ENCODE measurements at regions of chr19 and their contacts with region 1.

Region 1: DNA sequence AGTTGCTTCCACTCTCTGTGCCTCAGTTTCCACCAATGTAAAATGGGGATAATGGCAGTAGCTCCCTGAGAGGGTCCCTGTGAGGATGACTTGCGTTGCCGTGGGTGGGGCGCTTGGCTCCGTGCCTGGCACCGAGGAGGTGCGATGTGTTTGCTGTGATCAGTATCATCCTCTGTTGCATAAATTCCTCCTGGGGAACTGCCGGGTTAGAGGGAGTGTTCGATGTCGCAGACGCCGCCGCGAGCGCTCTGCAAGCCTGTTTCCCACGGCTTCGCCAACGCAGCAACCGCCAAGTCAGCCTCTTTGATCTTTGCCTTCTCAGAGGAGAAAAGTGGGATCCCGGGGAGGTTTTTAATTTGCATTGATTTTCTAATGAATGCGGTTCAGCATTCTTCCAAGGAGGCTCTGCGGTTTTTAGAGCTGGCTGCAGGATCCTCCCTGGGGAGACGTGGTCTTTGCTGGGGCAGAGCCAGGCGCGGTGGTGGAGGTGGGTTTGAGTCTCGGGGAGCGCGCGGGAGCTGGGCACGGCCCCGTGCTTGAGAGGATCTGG is 7.6 kb downstream of the GPR32 start:
- DNase-seq: no peak
- H3K27ac ChIP-seq: no peak overlapping the region
- CTCF ChIP-seq: no peak

Region 2: DNA sequence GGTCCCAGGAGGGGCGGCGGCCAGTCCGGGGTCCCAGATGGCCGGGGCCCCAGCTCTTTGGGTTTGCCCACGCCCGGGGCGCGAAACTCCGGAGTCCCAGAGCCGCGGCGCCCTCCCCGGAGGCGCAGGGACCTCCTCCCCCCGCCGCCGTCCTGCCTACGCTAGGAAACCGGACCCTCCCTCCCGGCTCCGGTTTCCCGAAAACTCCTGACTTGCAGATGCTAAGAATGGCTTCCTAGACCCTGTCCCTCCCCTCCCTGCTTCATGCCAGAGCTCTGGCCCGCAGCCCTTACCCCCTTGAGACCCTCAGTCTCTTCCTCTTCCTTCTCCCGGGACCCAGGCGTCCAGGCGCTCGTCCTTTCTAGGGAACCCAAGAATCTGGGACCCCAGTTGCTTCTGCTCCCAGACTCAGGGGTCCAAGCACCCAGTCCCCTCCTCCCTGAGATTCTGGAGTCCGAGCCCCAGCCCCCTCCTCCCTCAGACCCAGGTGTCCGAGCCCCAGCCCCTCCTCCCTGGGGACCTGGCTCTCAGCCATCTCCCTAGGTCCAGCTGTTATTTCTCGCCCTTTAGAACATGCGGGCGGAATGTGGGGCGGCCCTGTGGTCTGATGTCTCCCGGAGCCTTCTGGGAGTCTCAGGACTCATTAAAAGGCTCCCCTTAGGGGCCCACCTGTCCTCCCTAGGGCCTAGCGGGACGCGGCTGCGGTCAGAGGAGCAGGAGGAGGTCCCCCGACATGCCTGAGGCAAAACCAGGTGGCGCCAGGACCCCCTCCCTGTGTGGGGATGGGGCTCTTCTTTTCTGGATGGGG is 345.4 kb before region 1 on chr19 and contains the start of gene MYBPC2:
- CTCF ChIA-PET with region 1: no interaction called
- POLR2A ChIA-PET with region 1: no interaction called
- DNase-seq: no peak
- H3K27ac ChIP-seq: no peak within 1 kb of the TSS
- CTCF ChIP-seq: no peak

Region 3: DNA sequence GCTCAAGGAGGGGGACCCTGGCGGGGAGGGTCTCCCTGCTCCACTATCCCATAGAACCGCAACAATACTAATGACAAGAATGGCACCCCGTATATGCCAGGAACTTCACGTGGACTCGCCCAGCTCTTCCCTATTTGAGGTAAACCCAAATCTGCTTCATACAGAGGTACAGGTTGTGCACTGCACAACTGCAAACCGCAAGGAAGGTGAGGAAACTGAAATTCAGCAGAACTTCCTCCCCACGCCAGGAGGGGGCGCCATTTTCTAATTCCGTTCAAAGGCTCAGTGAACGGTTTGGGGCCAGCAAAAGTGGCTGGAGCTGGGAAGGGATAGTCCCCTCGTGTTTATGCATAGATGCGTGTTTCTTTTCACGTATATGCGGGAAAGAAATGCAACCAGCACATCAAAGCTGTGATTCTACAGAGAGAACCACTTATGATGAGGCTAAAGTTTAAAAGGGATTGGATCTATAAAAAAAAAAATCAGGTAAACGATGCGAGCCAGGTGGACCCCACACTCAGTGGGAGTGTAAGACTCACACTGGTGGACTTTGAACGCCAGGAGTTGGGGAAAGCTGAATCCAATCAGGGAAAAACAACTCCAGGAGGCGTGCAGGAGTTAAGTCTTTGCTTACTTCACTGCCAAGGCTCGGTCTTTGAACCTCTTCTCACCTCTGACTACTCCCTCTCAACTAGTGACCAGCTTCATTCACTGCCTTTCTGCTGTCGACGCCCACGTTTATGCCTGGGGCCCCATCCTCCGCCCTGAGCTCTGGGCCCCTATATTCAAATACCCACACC is 108.3 kb before region 1 on chr19:
- CTCF ChIA-PET with region 1: interaction called, 16 read pairs
- POLR2A ChIA-PET with region 1: no interaction called
- DNase-seq: peak; percentile 29
- H3K27ac ChIP-seq: no peak overlapping the region
- CTCF ChIP-seq: peak; percentile 80

Region 4: DNA sequence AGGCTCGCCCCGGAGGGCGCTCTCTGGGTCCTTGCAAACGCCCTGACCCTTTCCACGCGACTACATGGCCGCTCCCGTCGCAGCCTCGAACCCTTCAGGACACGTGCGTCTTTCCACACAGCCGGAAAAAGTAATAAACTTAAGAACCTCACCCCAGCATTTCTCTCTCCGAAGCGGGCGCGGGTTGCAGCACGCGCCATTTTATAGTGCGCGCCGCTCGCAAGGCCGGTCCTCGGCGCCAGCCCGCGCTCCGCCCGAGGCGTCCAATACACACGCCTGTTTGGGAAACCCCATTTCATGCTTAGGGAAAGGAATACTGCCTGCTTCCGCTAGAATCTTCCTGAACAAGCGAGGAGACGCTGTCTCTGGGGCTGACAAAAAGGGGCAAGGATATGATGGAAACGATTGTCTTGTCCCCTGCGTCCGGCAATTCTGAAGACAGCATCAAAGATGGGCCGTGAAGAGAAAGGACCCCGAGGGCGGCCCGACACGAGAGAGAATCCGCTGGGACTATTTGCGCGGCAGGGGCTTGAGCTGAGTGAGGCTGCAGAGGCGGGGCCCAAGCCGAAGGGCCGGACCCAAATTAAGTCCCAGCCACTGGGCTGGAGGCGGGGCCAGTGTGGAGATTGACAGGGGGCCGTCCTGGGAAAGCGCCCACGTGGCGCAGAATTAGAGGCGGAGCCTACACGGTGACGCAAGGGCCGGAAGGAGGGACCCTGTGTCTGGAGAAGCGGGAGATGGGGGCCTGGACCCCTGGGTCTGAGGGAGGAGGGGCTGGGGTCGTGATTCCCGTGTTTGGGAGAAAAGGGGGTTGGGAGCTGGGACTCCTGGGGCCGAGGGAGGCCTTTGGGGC is 26.8 kb after region 1 on chr19:
- CTCF ChIA-PET with region 1: no interaction called
- POLR2A ChIA-PET with region 1: no interaction called
- DNase-seq: peak; percentile 97
- H3K27ac ChIP-seq: peak overlapping the region; percentile 97
- CTCF ChIP-seq: no peak